ENCODE measurements at regions of chr3 and their contacts with region 1.

Region 1: DNA sequence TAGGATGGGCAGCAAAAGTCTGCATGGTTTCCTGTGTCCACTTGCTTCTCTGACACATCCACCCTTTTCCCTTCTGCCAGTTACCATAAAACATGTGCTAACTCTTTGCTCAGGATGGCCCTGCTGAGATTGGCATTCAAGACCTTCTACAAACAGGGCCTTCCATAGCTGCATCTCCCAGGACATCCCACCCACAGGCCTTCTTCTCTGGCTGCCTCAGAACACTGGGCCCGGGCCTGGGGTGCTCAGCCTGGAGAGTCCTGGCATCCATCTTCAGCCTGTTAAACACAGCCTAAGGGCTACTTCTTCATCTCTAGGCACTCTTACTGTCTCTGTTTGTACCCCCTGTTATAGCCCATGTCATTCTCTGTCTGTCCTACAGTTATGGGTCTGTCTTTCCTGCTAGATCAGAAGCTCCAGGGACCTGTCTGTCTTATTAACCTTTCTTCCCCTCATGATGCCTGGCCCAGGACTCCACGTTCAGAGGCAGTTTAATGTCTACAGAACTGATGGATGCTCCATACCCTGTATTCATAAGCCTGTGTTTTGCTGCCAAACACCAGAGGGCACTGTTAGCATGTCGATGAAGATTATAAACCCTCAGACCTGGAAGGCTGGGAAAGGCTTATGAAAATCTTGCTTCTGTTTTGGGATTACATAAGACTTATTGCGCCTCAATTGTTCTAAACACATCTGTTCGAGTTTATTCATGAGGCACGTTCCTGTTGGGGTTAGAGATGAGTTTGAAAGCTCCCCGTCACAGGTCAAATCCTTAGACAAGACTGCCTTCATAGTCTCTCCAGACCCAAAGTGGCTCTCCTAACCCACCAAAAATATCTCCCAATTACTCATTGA is 16.5 kb downstream of the SEMA3G start:
- DNase-seq: peak; percentile 23
- H3K4me3 ChIP-seq: no peak overlapping the region
- CTCF ChIP-seq: peak; percentile 80

Region 2: DNA sequence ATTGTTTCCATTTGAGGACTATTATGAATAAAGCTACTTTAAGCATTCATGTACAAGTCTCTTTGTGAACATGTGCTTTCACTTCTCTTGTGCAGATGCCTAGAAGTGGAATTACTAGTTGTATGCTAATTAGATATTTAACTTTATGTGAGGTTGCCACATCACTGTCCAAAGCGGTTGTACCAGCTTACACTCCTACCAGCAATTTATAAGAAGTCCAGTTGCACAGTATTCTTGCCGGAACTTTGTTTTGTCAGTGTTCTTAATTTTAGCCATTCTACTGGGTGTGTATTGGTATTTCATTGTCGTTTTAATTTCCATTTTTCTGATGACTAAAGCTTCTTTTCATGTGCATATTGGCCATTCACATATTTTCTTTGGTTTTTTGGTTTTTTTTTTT is 12.6 kb before region 1 on chr3:
- CTCF ChIA-PET with region 1: interaction called, 96 read pairs
- POLR2A ChIA-PET with region 1: no interaction called
- DNase-seq: no peak
- H3K4me3 ChIP-seq: no peak overlapping the region
- CTCF ChIP-seq: no peak

Region 3: GRCh38 chr3:52455283-52456168 is 27.1 kb after region 1 on chr3 and contains the start of gene NISCH:
- CTCF ChIA-PET with region 1: interaction called, 1,004 read pairs
- POLR2A ChIA-PET with region 1: no interaction called
- DNase-seq: no peak
- H3K4me3 ChIP-seq: peak within 1 kb of the TSS; percentile 84
- CTCF ChIP-seq: no peak

Region 4: GRCh38 chr3:52682016-52682415 is 253.6 kb after region 1 on chr3:
- CTCF ChIA-PET with region 1: interaction called, 11 read pairs
- POLR2A ChIA-PET with region 1: no interaction called
- DNase-seq: peak; percentile 37
- H3K4me3 ChIP-seq: no peak overlapping the region
- CTCF ChIP-seq: peak; percentile 18